Activated T-helper 2 cell treated with anti-CD3 and anti-CD28 coated beads, Interferon-gamma antibody, Interleukin-2, Interleukin-4, amounts not matched to agents 10 μg/mL and 5 μg/mL and 100 μg/mL, durations not matched to agents 14 hours and 24 hours and 36 hours (primary cell): ENCODE measurements at regions of chr6 and their contacts with region 1.

Region 1: GRCh38 chr6:45922728-45923351 is 92.8 kb downstream of the CLIC5 start:
- DNase-seq: peak; percentile 58
- H3K4me3 Mint-ChIP-seq: peak overlapping the region; percentile 53
- H3K27ac Mint-ChIP-seq: peak overlapping the region; percentile 94
- H3K4me1 Mint-ChIP-seq: peaks cover 68% of the 10 kb centered on the region
- H3K27me3 Mint-ChIP-seq: no peaks in the 10 kb centered on the region

Region 2: DNA sequence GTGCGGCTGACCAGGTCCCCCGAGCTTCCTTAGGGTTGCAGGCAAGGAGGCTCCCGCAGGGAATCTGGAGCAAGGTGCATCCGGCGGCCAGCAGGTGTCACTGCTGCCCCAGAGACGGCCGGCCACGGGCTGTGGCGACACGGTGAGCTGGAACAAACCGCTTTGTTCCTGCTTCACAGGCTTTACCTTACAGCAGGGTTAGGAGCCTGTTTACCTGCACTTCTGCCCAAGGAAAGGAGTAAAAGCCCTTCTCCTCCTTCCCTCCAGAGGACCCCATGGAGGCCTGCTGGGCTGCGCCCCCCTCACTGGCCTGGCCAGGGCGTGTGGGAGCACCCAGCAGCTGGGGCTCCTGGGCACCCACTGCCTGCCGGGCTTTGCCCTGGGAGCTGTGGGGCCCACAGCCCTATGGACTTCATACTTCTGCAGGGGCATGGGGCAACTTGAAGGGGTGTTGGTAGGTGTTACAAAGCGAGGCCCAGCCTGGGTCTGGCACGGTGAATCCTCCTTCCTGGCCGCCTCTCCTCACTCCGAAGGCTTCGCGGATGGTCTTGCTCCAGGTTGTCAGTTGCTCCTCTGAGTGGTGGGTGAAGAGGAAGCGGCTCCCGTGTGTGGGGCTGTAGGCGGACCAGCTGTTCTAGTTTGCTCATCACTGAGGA is 1446.9 kb before region 1 on chr6:
- intact Hi-C with region 1: loop called (anchors 5 kb)
- DNase-seq: peak; percentile 61
- H3K4me3 Mint-ChIP-seq: no peak overlapping the region
- H3K27ac Mint-ChIP-seq: no peak overlapping the region
- H3K4me1 Mint-ChIP-seq: no peaks in the 10 kb centered on the region
- H3K27me3 Mint-ChIP-seq: peaks cover 17% of the 10 kb centered on the region

Region 3: GRCh38 chr6:44932651-44933091 is 990.2 kb before region 1 on chr6:
- intact Hi-C with region 1: loop called (anchors 10 kb)
- DNase-seq: no peak
- H3K4me3 Mint-ChIP-seq: peak overlapping the region; percentile 78
- H3K27ac Mint-ChIP-seq: peak overlapping the region; percentile 93
- H3K4me1 Mint-ChIP-seq: peaks cover 48% of the 10 kb centered on the region
- H3K27me3 Mint-ChIP-seq: no peaks in the 10 kb centered on the region

Region 4: GRCh38 chr6:45377554-45378333 is 545.1 kb before region 1 on chr6 and contains the start of gene SUPT3H:
- intact Hi-C with region 1: loop called (anchors 1 kb)
- DNase-seq: peak; percentile 89
- H3K4me3 Mint-ChIP-seq: peak within 1 kb of the TSS; percentile 99
- H3K27ac Mint-ChIP-seq: peak within 1 kb of the TSS; percentile 100
- H3K4me1 Mint-ChIP-seq: peaks cover 23% of the 10 kb centered on the region
- H3K27me3 Mint-ChIP-seq: no peaks in the 10 kb centered on the region
- total RNA-seq, gene SUPT3H: 14.8 and 19.4 TPM in 2 replicates

Region 5: DNA sequence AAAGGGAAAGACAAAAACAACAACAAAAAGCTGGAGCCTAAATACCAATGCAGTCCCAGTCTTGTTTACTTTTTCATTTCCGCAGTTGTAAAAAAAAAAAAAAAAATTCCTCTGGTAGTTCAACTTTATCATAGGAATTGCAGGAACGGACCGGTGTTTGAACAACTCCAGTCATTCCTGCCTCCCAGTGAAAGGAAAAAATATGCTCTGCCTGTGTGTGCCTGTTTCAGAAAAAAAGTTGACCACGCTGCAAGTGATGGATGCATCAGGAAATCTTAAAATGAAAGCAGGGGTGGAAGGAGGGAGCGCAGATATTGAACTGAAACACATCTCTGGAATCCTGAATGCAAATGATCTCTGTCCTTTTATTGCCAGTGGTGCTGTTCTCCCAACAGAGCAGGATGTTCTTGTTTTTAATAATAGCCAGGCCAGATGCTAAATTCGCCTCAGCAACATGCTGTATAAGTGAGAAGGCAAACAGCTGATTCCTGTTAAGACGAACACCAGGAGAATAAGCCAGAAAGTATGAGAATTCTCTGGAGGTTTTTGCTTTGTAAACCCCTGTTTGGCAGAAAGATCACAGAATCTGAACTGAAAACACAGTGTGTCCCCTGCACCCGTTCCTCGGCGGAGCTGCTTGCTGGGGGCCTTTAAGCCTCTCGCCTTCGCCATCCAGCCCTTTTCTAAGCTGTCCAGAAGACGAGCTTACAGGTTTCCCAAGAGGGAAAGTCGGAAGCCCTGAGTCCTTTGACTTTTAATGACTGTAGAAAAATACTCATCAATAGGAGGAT is 366.7 kb before region 1 on chr6:
- intact Hi-C with region 1: loop called (anchors 2 kb)
- DNase-seq: no peak
- H3K4me3 Mint-ChIP-seq: no peak overlapping the region
- H3K27ac Mint-ChIP-seq: no peak overlapping the region
- H3K4me1 Mint-ChIP-seq: peaks cover 69% of the 10 kb centered on the region
- H3K27me3 Mint-ChIP-seq: no peaks in the 10 kb centered on the region

Region 6: GRCh38 chr6:45663551-45664221 is 259.2 kb before region 1 on chr6:
- intact Hi-C with region 1: loop called (anchors 5 kb)
- DNase-seq: peak; percentile 27
- H3K4me3 Mint-ChIP-seq: peak overlapping the region; percentile 43
- H3K27ac Mint-ChIP-seq: peak overlapping the region; percentile 56
- H3K4me1 Mint-ChIP-seq: peaks cover 70% of the 10 kb centered on the region
- H3K27me3 Mint-ChIP-seq: peaks cover 4% of the 10 kb centered on the region

Region 7: DNA sequence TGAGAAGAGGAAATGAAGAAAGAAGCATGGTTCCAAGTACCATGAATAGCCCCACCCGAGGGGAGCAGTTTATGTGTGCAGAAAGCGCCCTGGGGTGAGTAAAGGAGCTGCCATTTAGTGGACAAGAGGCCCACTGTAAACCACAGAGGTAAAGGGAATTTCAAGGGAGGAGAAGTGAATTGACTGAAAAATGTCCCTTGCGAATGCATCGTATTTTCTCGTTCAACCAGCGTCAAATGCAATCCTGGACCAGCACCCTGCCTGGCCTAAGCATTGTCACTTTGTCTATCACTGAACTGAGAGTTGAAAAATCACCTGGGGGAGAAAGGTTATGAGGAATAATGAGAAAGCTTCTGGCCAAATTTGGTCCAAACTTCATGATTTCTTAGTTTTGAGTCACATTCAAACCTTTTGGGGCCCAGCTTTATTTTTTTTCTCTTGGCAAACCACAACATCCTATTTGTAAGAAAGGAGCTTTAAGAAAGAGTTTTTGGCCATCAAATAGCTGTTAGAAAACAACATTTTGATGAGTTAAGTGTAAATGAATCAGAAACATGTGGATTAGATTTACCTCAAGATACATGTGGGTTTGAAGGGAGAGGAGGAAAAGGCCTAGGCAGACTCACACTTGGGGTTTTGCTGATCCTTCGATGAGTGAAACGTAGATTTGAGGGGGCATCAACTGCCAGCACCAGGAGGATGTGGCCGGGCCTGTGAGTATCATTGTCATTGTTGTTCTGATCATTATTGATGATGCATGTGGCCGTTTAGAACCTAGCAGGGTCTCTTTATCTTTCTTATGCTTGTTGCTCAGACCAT is 121.2 kb before region 1 on chr6:
- intact Hi-C with region 1: loop called (anchors 1 kb)
- DNase-seq: peak; percentile 55
- H3K4me3 Mint-ChIP-seq: no peak overlapping the region
- H3K27ac Mint-ChIP-seq: peak overlapping the region; percentile 88
- H3K4me1 Mint-ChIP-seq: peaks cover 36% of the 10 kb centered on the region
- H3K27me3 Mint-ChIP-seq: no peaks in the 10 kb centered on the region

Region 8: DNA sequence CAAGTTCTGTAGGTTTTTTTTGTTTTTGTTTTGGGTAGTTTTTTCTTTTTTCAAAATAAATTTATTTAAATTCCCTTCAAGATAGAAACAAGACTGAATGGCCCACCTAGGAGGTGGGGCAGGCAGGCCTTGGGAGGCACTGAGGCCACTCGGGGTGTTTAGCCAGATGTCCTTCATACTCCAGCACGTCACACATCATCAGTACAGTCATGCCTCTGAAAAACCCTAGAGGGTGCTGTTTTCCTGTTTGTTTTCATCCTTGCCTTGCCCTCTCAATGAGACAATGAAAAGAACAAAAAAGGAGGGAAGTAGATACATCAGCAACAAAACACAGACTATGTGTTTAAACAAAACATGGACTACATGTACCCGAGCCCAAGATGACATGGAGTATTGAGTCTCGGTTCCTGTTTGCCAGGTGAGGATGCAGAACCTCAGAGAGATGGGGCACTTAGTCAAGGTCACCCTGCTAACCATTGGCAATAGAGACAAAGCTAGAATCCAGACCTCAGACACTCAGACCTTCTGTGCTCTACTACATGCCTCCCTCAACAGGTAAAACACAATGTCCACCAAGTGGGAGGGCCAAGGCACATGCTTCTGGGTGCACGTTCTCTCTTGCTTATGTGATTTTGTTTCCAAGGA is 119.6 kb after region 1 on chr6:
- intact Hi-C with region 1: no loop called
- DNase-seq: no peak
- H3K4me3 Mint-ChIP-seq: no peak overlapping the region
- H3K27ac Mint-ChIP-seq: no peak overlapping the region
- H3K4me1 Mint-ChIP-seq: peaks cover 6% of the 10 kb centered on the region
- H3K27me3 Mint-ChIP-seq: peaks cover 5% of the 10 kb centered on the region

Region 9: DNA sequence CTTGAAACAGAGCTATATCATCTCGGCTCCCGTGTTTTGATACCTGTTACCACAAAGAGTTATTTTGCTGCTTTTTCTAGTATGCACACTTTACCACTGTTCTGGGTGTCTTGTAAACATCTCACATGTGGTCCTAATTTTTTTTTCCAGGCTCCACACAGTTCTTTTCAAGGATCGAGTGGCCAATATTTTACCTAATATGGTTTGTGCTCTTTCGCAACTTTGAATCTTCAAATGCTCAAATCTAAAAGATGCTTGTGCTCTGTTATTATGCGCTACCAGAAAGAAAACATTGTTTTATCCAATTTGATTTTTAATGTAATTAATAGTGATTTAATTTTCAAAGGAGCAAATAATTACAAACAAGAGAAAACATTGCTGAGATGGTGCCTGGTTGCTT is 237.3 kb after region 1 on chr6:
- intact Hi-C with region 1: no loop called
- DNase-seq: no peak
- H3K4me3 Mint-ChIP-seq: no peak overlapping the region
- H3K27ac Mint-ChIP-seq: no peak overlapping the region
- H3K4me1 Mint-ChIP-seq: no peaks in the 10 kb centered on the region
- H3K27me3 Mint-ChIP-seq: peaks cover 53% of the 10 kb centered on the region